ENCODE measurements at regions of chr16 and their contacts with region 1.

Region 1: DNA sequence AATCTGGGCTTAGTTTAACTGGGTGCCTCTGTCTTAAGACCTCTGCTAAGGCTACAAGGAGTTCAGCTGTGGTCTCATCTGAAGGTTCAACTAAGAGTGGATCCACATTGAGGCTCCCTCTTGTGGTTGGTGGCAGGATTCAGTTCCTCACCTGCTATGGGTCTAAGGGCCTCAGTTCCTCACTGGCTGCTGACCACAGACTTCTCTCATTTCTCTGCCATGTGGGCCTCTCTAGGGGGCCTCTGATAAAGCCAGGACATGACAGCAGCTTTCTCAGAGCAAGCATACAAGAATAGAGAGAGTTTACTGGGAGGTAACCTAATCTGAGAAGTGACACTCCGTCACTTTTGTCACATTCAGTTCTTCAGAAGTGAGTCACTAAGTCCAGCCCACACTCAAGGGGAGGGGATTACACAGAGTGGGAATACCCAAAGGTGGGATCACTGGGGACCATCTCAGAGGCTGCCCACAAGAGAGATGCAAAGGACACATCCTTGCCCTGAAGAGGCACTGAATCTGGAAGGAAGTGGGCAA is 19.2 kb upstream of the ABAT start:
- DNase-seq: peak; percentile 61
- H3K4me3 ChIP-seq: no peak overlapping the region
- H3K27ac ChIP-seq: peak overlapping the region; percentile 37
- H3K4me1 ChIP-seq: peaks cover 4% of the 10 kb centered on the region
- H3K27me3 ChIP-seq: no peaks in the 10 kb centered on the region
- CTCF ChIP-seq: peak; percentile 71

Region 2: GRCh38 chr16:8611886-8612600 is 43.2 kb before region 1 on chr16:
- CTCF ChIA-PET with region 1: interaction called, 17 read pairs
- POLR2A ChIA-PET with region 1: no interaction called
- intact Hi-C with region 1: no loop called
- DNase-seq: peak; percentile 50
- H3K4me3 ChIP-seq: no peak overlapping the region
- H3K27ac ChIP-seq: no peak overlapping the region
- H3K4me1 ChIP-seq: no peaks in the 10 kb centered on the region
- H3K27me3 ChIP-seq: no peaks in the 10 kb centered on the region
- CTCF ChIP-seq: no peak

Measured in A673 (cell line).